GM12878 (cell line): ENCODE measurements at regions of chr1 and their contacts with region 1.

Region 1: DNA sequence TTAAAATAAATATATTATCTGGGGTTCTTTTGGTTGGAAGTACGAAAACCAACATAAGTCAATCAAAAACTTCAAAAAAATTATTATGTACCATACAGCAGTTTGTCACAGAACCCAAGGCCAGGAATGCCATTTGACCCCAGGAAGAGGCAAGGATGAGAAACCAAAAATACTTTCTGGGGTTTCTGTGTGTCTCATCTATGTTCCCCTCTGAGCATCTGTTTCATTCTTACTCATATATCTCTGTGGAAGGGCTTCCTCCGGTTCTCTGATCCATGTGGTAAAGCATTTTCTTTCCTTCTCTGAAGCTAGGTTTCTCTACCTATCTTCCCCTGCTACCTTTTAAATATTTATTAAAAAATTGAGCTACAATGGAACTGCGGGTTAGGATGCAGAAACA is 9.8 kb upstream of the FCRL1 start:
- DNase-seq: no peak
- ATAC-seq: peak; percentile 48
- H3K4me3 ChIP-seq: no peak overlapping the region
- H3K27ac ChIP-seq: no peak overlapping the region
- H3K4me1 ChIP-seq: peaks cover 42% of the 10 kb centered on the region
- H3K27me3 ChIP-seq: no peaks in the 10 kb centered on the region; a peak in 1 of 4 replicates
- CTCF ChIP-seq: no peak
- EP300 ChIP-seq: no peak
- POLR2A ChIP-seq: no peak
- RAD21 ChIP-seq: no peak

Region 2: GRCh38 chr1:157806431-157807149 is 23.1 kb before region 1 on chr1:
- CTCF ChIA-PET with region 1: interaction called, 4 read pairs
- POLR2A ChIA-PET with region 1: no interaction called
- RAD21 ChIA-PET with region 1: no interaction called
- SMC1A ChIA-PET with region 1: interaction called, 4 read pairs
- in situ Hi-C with region 1: no loop called
- intact Hi-C with region 1: loop called (anchors 2 kb)
- DNase-seq: peak; percentile 68
- ATAC-seq: peak; percentile 89
- H3K4me3 ChIP-seq: peak overlapping the region; percentile 35
- H3K27ac ChIP-seq: peak overlapping the region; percentile 68
- H3K4me1 ChIP-seq: peaks cover 24% of the 10 kb centered on the region
- H3K27me3 ChIP-seq: 0 out of 4 replicates have a peak, but pooled peaks cover 0 to 3% of the 10 kb centered on the region in 2 experiments
- CTCF ChIP-seq: no peak
- EP300 ChIP-seq: 0 out of 4 replicates have a peak, but pooled peaks of 1 of the 2 experiments have one; percentile 19
- POLR2A ChIP-seq: 0 out of 2 replicates have a peak, but pooled peaks have one; percentile 40
- RAD21 ChIP-seq: 0 out of 2 replicates have a peak, but pooled peaks have one; percentile 10